ENCODE measurements at regions of chr2 and their contacts with region 1.

Region 1: GRCh38 chr2:18520451-18521425 is 39.7 kb downstream of the RDH14 start:
- DNase-seq: peak; percentile 98
- H3K4me3 ChIP-seq: no peak overlapping the region
- H3K27ac ChIP-seq: peak overlapping the region; percentile 77 to 86 (median 81)
- H3K4me1 ChIP-seq: peaks cover 36 to 93% (median 89%) of the 10 kb centered on the region in 4 donors
- H3K27me3 ChIP-seq: no peaks in the 10 kb centered on the region
- CTCF ChIP-seq: peak; percentile 90 to 94 (median 91)
- EP300 ChIP-seq: no peak
- POLR2A ChIP-seq: no peak

Region 2: DNA sequence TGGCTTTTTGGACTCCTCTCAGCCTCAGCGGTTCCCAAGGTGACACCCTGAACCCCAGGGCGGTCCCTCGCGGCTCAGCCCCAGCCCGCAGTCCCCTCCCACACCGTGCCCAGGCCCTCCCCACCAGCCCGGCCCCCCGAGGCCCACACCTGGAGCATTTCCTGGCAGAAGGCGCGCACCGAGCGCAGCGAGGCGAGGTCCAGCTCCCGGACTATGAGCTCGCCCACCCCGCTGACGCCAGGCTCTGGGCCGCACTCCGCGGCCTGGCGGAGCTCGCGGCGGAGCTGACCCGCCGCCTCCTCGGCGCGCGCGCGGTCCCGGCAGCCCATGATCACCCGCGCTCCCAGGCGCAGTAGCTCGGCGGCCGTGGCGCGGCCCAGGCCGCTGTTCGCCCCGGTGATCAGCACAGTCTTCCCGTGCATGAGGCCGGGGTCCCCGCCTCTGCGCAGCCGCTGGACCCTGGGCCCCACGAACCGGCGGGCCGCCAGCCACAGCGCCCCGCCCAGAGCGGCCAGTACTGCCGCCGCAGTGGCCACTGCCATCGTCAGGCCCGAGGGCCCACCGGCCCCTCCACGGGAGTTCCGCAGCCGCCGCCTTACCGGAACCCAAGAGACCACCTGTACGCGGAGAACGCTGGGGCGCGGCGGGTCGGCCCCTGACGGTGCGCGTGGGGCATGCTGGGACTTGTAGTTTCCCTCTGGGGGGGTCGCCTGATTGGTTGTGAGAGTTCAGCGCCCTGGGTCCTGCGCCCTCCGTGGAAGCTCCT is 39.5 kb after region 1 on chr2 and contains the start of gene RDH14:
- intact Hi-C with region 1: loop called (anchors 5 kb)
- DNase-seq: peak; percentile 99
- H3K4me3 ChIP-seq: peak within 1 kb of the TSS; percentile 75 to 95 (median 89)
- H3K27ac ChIP-seq: peak within 1 kb of the TSS; percentile 97 to 100 (median 99)
- H3K4me1 ChIP-seq: peaks cover 35 to 54% (median 44%) of the 10 kb centered on the region in 4 donors
- H3K27me3 ChIP-seq: no peaks in the 10 kb centered on the region
- CTCF ChIP-seq: peak in 2 of 3 experiments; percentile 8
- EP300 ChIP-seq: no peak
- POLR2A ChIP-seq: peak; percentile 59
- total RNA-seq, gene RDH14: 56.9 to 72.2 (median 65.1) TPM

Region 3: GRCh38 chr2:18741895-18742732 is 221.4 kb after region 1 on chr2:
- intact Hi-C with region 1: loop called (anchors 2 kb)
- DNase-seq: peak; percentile 94
- H3K4me3 ChIP-seq: peak overlapping the region in 2 of 4 donors; percentile 13 to 16
- H3K27ac ChIP-seq: peak overlapping the region; percentile 64 to 81 (median 66)
- H3K4me1 ChIP-seq: peaks cover 8 to 61% (median 40%) of the 10 kb centered on the region in 4 donors
- H3K27me3 ChIP-seq: no peaks in the 10 kb centered on the region
- CTCF ChIP-seq: peak; percentile 22 to 42 (median 23)
- EP300 ChIP-seq: no peak
- POLR2A ChIP-seq: no peak

Region 4: GRCh38 chr2:18987592-18988073 is 466.9 kb after region 1 on chr2:
- intact Hi-C with region 1: loop called (anchors 10 kb)
- DNase-seq: peak; percentile 94
- H3K4me3 ChIP-seq: no peak overlapping the region
- H3K27ac ChIP-seq: peak overlapping the region; percentile 11 to 42 (median 36)
- H3K4me1 ChIP-seq: peaks cover 16 to 43% (median 36%) of the 10 kb centered on the region in 4 donors
- H3K27me3 ChIP-seq: no peaks in the 10 kb centered on the region
- CTCF ChIP-seq: peak; percentile 36 to 50 (median 43)
- EP300 ChIP-seq: no peak
- POLR2A ChIP-seq: no peak

Region 5: GRCh38 chr2:19362755-19363473 is 842.2 kb after region 1 on chr2:
- intact Hi-C with region 1: loop called (anchors 5 kb)
- DNase-seq: peak; percentile 93
- H3K4me3 ChIP-seq: peak overlapping the region; percentile 52 to 74 (median 68)
- H3K27ac ChIP-seq: peak overlapping the region; percentile 87 to 94 (median 91)
- H3K4me1 ChIP-seq: peaks cover 14 to 53% (median 43%) of the 10 kb centered on the region in 4 donors
- H3K27me3 ChIP-seq: peaks cover 0 to 6% (median 0%) of the 10 kb centered on the region in 4 donors
- CTCF ChIP-seq: peak; percentile 79 to 84 (median 81)
- EP300 ChIP-seq: no peak
- POLR2A ChIP-seq: no peak

Region 6: DNA sequence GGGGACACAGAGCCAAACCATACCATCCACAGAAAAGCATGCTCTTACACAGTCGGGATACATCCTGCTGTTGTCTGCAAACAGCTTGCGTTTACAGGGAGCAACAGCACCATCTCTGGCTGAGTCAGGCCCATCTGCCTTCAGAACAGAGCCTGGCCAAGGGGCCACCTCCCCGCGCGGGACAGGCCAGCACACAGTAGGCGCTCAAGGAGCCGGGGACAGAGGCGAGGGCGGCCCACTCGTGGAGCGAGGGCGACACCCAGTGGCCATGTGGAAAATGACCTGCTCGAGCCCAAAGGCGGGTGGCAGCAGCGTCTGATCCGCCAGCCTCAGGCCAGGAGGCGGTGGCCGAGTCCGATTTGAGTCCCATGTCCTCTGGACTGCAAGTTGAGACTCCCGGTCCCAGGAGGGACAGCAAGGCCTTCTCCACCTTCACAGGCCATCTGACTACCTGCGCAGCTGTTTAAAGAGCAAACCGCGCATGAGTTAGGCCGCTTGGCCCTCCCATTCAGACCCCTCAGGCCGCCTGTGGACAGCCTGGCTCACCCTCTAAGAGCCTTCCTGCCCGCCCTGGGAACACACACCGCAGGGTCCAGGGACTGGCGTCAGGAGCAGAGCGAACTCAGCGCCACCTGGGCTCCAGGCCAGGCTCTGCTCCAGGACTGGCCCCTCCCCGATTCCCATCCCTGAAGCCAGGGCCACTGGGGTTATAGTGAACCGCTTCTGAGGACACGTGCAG is 1342.7 kb after region 1 on chr2:
- intact Hi-C with region 1: loop called (anchors 1 kb)
- DNase-seq: no peak
- H3K4me3 ChIP-seq: peak overlapping the region in 2 of 4 donors; percentile 15 to 19
- H3K27ac ChIP-seq: no peak overlapping the region
- H3K4me1 ChIP-seq: peaks cover 3 to 42% (median 31%) of the 10 kb centered on the region in 4 donors
- H3K27me3 ChIP-seq: peaks cover 0 to 2% (median 0%) of the 10 kb centered on the region in 4 donors
- CTCF ChIP-seq: peak; percentile 92 to 97 (median 93)
- EP300 ChIP-seq: no peak
- POLR2A ChIP-seq: no peak